Caco-2 (cell line): ENCODE measurements at regions of chr13 and their contacts with region 1.

Region 1: DNA sequence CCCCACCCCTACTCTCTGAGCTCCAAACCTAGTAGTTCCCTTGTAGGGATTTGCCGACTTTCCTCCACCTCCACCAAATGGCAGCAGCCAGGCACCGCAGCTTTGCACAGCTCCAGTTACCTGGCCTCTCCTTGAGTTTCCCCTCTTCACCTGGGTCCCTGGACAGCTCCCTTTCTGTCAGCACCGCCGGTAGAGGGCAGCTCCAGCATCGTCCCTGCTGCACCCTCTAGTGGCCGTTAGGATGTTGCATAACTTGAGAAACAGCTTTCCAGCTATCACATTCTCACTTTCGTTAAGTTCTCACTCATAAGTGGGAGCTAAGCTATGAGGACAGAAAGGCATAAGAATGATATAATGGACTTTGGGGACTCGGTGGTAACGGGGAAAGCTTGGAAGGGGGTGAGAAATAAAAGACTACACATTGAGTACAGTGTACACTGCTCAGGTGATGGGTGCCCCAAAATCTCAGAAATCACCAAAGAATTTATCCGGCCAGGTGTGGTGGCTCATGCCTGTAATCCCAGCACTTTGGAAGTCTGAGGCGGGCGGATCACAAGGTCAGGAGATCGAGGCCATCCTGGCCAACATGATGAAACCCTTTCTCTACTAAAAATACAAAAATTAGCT is 60.4 kb upstream of the OLFM4 start:
- DNase-seq: peak; percentile 86 to 89
- H3K4me3 ChIP-seq: no peak overlapping the region
- H3K4me3 Mint-ChIP-seq: no peak overlapping the region
- H3K27ac Mint-ChIP-seq: no peak overlapping the region
- H3K4me1 ChIP-seq: no peaks in the 10 kb centered on the region
- H3K4me1 Mint-ChIP-seq: no peaks in the 10 kb centered on the region
- H3K27me3 ChIP-seq: no peaks in the 10 kb centered on the region
- H3K27me3 Mint-ChIP-seq: peaks cover 11% of the 10 kb centered on the region
- CTCF ChIP-seq: peak; percentile 93 to 100

Region 2: DNA sequence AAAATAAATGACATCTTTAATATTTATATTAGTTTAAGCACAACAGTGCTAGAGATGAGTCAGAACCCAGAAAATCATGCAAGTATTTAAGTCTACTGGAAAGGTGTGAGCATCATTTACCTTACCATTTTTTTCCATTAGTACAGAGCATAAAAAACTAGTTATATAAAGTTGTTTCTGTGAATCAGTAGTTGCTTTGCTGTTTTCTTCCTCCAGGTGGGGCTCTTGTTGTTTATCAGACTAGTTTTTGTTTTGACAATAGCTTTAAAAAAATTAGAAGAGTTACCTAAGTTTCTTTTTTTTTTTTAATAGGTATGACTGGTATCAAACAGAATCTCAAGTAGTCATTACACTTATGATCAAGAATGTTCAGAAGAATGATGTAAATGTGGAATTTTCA is 302.9 kb before region 1 on chr13:
- CTCF ChIA-PET with region 1: interaction called, 7 read pairs
- POLR2A ChIA-PET with region 1: no interaction called
- intact Hi-C with region 1: loop called (anchors 1 kb)
- DNase-seq: no peak
- H3K4me3 ChIP-seq: no peak overlapping the region
- H3K4me3 Mint-ChIP-seq: no peak overlapping the region
- H3K27ac Mint-ChIP-seq: no peak overlapping the region
- H3K4me1 ChIP-seq: no peaks in the 10 kb centered on the region
- H3K4me1 Mint-ChIP-seq: no peaks in the 10 kb centered on the region
- H3K27me3 ChIP-seq: no peaks in the 10 kb centered on the region
- H3K27me3 Mint-ChIP-seq: no peaks in the 10 kb centered on the region
- CTCF ChIP-seq: peak; percentile 42 to 44

Region 3: DNA sequence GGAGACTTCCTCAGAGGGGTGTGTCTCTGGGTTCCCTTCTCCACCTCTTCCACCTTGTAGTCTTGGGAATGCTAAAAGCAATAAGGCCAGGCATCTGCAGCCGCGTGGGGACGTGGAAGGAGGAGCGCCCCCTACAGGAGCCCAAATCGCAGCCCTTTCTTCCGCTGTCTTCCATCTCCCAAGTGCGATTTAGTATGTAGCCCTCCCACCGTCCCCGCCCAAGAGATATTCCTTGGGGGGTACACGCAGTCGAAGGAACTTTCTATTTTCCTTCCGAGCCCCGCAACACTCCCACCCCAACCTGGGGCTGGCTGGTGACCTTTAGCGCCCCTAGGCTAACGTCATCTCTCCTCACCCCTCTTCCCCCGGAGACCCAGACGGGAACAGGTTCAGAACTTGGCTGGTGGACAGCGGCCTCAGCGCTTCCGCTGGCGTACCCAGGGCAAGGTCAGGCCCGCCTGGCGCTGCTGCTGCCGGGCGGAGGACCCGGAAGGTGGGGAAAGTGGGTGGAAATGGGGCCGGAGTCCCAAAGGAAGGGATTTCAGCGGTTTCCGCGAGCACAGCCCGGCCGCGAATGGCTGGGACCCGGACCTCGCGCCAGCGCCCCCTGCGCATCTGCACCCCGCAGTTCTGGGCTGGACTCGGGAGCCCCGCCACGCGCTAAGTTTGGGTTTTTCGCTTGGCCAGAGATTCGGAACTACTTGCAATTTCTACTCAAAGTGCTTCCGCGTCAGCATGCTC is 117.6 kb before region 1 on chr13:
- CTCF ChIA-PET with region 1: interaction called, 13 read pairs
- POLR2A ChIA-PET with region 1: no interaction called
- intact Hi-C with region 1: no loop called
- DNase-seq: peak; percentile 82 to 87
- H3K4me3 ChIP-seq: peak overlapping the region; percentile 74
- H3K4me3 Mint-ChIP-seq: peak overlapping the region; percentile 87
- H3K27ac Mint-ChIP-seq: peak overlapping the region; percentile 83
- H3K4me1 ChIP-seq: no peaks in the 10 kb centered on the region
- H3K4me1 Mint-ChIP-seq: no peaks in the 10 kb centered on the region
- H3K27me3 ChIP-seq: no peaks in the 10 kb centered on the region
- H3K27me3 Mint-ChIP-seq: peaks cover 9% of the 10 kb centered on the region
- CTCF ChIP-seq: no peak

Region 4: DNA sequence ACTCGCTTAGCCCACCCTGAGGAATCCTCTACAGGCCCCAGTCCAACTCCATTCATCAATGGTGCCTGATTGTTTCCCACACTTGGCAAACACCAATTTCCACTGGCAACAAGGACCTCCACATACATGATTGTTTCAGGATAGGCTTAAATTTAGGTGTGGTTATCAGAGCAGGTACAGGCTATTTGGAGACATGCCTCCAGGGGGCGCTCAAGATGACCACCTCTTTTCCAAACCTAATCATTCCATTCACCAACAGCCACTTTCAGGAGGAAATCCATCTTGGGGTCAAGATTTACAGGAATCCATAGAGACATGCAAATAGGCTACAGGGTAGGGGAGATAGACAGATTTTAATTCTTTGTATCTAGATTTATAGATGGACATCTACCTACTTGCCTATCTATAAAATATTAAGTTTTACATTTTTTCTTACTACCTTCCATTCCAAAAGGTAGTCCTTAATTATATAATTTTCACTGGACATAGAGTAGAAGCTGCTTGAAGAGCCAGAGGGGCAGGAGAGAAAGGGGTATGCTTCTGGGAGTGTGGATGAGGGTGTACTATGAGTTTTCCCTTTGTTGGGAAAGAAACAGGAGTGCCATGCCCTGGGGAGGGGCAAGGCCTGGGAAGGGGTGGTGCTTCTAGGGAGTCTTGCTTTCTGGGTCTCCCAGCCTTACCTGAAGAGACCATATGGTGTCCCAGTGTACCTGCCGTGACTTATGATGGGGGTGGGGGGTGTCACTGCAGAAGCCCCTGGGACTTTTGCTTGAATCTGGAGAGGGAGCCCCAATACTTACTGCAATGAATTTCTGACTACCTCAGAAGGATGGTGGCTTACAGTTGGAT is 105.6 kb before region 1 on chr13:
- CTCF ChIA-PET with region 1: interaction called, 6 read pairs
- POLR2A ChIA-PET with region 1: no interaction called
- intact Hi-C with region 1: loop called (anchors 1 kb)
- DNase-seq: peak in 1 of 2 experiments; percentile 57
- H3K4me3 ChIP-seq: no peak overlapping the region
- H3K4me3 Mint-ChIP-seq: no peak overlapping the region
- H3K27ac Mint-ChIP-seq: no peak overlapping the region
- H3K4me1 ChIP-seq: no peaks in the 10 kb centered on the region
- H3K4me1 Mint-ChIP-seq: no peaks in the 10 kb centered on the region
- H3K27me3 ChIP-seq: no peaks in the 10 kb centered on the region; the same call in 1 of the 2 replicates
- H3K27me3 Mint-ChIP-seq: peaks cover 8% of the 10 kb centered on the region
- CTCF ChIP-seq: peak; percentile 38 to 73

Region 5: GRCh38 chr13:52955472-52955874 is 12.7 kb before region 1 on chr13:
- CTCF ChIA-PET with region 1: interaction called, 12 read pairs
- POLR2A ChIA-PET with region 1: no interaction called
- intact Hi-C with region 1: no loop called
- DNase-seq: no peak
- H3K4me3 ChIP-seq: no peak overlapping the region
- H3K4me3 Mint-ChIP-seq: no peak overlapping the region
- H3K27ac Mint-ChIP-seq: no peak overlapping the region
- H3K4me1 ChIP-seq: no peaks in the 10 kb centered on the region
- H3K4me1 Mint-ChIP-seq: no peaks in the 10 kb centered on the region
- H3K27me3 ChIP-seq: no peaks in the 10 kb centered on the region
- H3K27me3 Mint-ChIP-seq: no peaks in the 10 kb centered on the region
- CTCF ChIP-seq: no peak

Region 6: DNA sequence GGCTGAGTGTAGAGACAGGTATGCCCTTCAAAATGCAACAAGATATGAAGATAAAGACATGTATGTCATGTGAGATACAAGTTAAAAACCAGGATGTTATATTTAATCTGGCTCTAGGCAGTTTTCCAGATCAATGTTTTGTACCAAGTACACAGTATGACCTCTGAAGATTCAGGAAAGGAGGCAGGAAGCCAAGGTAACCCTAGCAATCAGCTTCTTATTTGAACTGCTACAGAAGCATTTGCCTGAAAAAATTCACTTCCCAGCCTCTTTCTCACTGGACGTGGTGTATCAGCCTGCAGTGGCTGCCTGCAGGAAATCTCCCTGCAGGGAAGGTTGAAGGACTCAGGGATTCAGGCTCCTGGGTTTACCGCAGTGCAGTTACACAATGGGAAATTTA is 84.5 kb after region 1 on chr13:
- CTCF ChIA-PET with region 1: no interaction called
- POLR2A ChIA-PET with region 1: no interaction called
- intact Hi-C with region 1: no loop called
- DNase-seq: no peak
- H3K4me3 ChIP-seq: no peak overlapping the region
- H3K4me3 Mint-ChIP-seq: no peak overlapping the region
- H3K27ac Mint-ChIP-seq: no peak overlapping the region
- H3K4me1 ChIP-seq: no peaks in the 10 kb centered on the region
- H3K4me1 Mint-ChIP-seq: no peaks in the 10 kb centered on the region
- H3K27me3 ChIP-seq: no peaks in the 10 kb centered on the region
- H3K27me3 Mint-ChIP-seq: peaks cover 3% of the 10 kb centered on the region
- CTCF ChIP-seq: no peak

Region 7: DNA sequence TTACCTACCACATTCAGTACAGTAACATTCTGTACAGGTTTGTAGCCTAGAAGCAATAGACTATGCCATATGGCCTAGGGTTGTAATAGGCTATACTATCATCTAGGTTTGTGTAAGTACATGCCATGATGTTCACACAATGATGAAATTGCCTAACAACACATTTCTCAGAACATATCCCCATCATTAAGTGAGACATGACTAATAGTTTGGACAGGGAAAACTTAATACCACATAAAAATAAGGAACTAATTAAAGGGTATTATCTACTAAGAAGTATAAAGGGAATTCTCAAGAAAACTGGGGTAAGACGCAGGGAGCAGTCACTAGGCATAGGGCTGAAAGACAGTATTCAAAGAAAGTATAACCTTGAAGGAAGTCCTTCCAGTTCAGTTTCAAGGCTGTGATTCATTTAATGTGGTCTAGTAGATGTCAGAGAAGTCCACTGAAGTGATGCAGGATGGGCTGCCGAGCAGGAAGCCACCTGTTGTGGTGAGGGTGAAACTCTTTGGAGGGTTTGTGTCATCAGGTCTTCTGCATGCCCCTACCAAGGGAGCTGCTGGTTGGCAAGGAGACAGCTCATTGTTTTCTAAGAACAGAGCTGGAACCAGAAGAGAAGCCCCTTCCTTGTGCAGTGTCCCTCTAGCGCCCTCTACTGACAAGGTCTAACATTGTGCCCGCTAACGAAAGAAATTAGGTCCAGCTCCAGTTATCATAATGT is 183.3 kb after region 1 on chr13:
- CTCF ChIA-PET with region 1: interaction called, 42 read pairs
- POLR2A ChIA-PET with region 1: no interaction called
- intact Hi-C with region 1: loop called (anchors 2 kb)
- DNase-seq: peak; percentile 47 to 59
- H3K4me3 ChIP-seq: no peak overlapping the region
- H3K4me3 Mint-ChIP-seq: no peak overlapping the region
- H3K27ac Mint-ChIP-seq: no peak overlapping the region
- H3K4me1 ChIP-seq: no peaks in the 10 kb centered on the region
- H3K4me1 Mint-ChIP-seq: no peaks in the 10 kb centered on the region
- H3K27me3 ChIP-seq: no peaks in the 10 kb centered on the region
- H3K27me3 Mint-ChIP-seq: peaks cover 6% of the 10 kb centered on the region
- CTCF ChIP-seq: peak; percentile 80